Activated CD4-positive, alpha-beta T cell treated with anti-CD3 and anti-CD28 coated beads, Interleukin-2, amount 10 ng/mL, durations not matched to agents 7 days and 5 days (primary cell): ENCODE measurements at regions of chr3 and their contacts with region 1.

Region 1: DNA sequence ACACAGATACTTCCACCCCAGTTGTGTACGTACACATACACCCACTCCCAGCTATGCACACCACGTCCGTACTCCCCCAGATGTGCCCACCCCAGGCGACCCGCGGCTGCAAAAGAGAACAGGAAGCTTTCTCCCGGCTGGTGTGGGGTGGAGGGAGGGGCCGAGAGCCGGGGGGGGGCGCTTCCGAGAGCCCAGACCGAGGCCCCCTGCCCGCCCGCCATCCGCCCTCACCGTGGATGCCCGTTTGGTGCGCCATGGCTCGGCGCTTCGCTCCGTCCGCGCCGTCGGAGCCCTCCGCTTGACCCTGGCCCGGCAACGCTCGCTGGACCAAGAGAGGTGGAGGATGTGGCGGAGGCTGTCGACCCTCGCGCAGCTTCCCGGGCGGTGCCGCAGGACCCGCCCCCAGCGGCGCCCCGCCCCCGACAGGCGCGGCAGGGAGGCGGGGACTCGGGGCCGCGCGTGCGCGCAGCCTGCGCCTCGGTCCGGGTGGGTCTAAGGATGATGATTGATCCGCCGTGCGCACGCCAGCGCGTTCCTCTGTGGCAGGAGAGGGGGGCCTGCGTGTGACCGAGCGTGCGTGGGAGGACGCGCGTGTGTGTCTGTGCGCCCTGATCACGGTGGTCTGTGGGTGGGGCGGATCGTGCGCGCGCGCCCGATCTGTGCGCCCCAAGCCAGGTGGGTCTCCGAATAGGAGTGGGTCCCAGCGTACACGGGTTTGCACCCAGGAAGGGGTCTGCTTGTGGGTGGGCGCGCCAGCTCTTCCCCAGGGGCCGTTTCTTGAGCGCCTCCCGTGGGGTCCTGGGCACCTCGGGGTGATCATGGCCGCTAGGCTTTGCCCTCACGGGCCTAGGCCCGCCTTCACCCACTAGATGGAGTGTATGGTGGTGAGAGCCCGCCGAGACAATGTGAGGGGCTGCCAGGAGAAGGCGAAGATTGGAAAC is at the start of gene TWF2:
- DNase-seq: peak; percentile 84
- H3K4me3 Mint-ChIP-seq: peak within 1 kb of the TSS; percentile 86
- H3K27ac Mint-ChIP-seq: peak within 1 kb of the TSS; percentile 94
- H3K4me1 Mint-ChIP-seq: peaks cover 76% of the 10 kb centered on the region
- H3K27me3 Mint-ChIP-seq: no peaks in the 10 kb centered on the region
- total RNA-seq, gene TWF2: 117 to 119 TPM

Region 2: GRCh38 chr3:52220380-52221026 is 18.5 kb before region 1 on chr3:
- CTCF ChIA-PET with region 1: interaction called, 84 read pairs
- POLR2A ChIA-PET with region 1: no interaction called
- DNase-seq: peak; percentile 91
- H3K4me3 Mint-ChIP-seq: peak overlapping the region; percentile 48
- H3K27ac Mint-ChIP-seq: peak overlapping the region; percentile 80
- H3K4me1 Mint-ChIP-seq: peaks cover 95% of the 10 kb centered on the region
- H3K27me3 Mint-ChIP-seq: no peaks in the 10 kb centered on the region

Region 3: DNA sequence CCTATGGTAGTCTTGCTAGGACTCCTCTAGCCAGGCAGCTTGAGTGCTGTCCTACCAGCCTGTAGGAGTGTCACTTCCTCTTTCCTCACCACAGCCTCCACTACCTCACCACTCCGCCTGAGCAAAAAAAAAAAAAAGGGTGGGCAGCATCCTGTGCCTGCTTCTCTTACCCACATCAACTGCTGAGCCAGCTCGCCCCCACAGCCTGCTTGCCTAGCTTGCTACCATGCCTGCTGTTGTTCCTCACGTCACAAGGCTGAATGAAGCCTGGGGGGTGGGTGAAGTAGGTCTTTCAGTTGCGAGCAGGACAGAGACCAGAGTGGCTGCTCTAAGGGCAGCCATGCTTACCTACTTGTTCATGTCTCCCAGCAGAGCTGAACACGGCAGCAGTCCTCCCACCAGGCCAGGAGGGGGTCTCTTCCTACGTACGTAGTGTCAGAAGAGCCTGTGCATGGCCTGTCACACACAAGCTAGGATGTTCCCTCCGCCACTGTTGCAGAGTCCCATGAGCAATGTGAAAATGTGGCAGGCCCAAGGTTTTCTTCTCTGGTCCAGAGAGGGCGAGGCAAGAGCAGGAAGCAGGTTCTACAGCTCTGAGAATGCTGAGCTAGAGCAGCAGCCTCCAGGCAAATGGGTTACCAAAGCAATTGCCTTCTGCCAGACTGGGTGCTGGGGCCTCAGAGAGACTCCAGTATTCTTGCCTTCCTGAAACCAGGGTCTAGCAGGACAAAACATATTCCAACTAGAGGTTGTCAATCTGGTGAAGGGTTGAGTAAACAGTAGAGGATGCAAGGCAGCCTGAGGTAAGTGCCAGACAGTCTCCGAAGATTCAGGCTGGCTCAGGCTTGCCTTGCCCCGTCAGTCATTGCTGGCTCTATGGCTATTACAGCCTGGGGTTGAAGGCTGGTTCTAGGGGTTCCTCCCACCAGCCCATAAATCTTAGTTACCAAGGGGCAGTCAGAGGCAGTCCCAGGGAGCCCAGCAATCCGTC is 14.6 kb after region 1 on chr3:
- CTCF ChIA-PET with region 1: interaction called, 17 read pairs
- POLR2A ChIA-PET with region 1: interaction called, 10 read pairs
- DNase-seq: peak; percentile 91
- H3K4me3 Mint-ChIP-seq: peak overlapping the region; percentile 75
- H3K27ac Mint-ChIP-seq: peak overlapping the region; percentile 97
- H3K4me1 Mint-ChIP-seq: peaks cover 91% of the 10 kb centered on the region
- H3K27me3 Mint-ChIP-seq: no peaks in the 10 kb centered on the region